Ovary (tissue), 10 donors: ENCODE measurements at regions of chr9 and their contacts with region 1.

Region 1: DNA sequence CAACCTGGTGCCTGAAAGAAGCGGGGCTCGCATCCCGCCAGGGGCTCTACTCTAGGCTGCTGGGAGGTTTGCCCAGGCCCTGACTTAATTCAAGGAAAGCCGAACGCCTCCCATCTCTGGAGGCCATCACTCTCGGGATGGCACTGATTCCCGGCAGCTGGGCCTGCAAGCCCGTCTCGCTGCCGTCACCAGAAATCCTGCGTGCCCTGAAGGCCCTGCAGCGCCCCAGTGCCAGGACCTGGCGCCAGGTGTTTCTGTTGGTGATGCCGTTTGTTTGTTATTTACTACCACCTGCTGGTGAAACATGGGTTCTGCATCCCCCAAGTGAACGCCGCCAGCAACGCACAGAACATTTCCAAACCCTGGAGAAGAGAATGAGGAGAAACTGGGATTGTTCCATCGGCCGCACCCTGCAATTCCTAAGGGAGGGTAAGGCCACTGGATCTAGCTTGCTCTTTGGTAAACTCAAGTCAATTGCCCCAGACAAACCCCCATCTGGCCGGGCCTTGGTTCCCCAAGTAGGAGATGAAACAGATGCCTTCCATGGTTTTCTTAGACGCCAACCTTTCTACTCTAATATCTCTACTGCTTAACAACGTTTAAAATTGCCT is 77.9 kb downstream of the AK8 start:
- DNase-seq: peak; percentile 71 to 84 (median 78)
- H3K4me3 ChIP-seq: no peak overlapping the region
- H3K27ac ChIP-seq: peak overlapping the region in 1 of 2 donors; percentile 20
- H3K4me1 ChIP-seq: peaks cover 13% of the 10 kb centered on the region
- H3K27me3 ChIP-seq: no peaks in the 10 kb centered on the region
- CTCF ChIP-seq: peak; percentile 80 to 92 (median 88)
- EP300 ChIP-seq: no peak
- POLR2A ChIP-seq: no peak

Region 2: DNA sequence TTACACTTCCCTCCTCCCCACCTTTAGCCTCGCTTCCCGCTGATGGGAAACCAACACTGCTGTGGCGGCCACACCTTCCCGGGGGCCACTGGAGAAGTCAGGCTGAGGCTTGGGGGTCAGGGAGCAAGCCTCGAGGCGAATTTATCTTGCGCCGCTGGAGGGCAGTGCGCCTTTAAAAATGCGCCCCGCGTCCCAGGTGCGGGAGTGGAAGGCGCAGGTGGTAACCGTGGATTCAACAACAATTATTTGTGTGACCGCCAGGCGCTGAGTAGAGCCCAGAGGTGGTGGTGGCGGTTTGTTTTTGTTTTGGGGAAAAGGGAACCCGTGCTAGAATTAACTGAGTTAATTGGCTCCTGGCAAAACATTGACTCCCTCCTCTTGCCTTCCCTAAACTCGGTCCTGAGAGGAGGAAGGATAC is 389.0 kb before region 1 on chr9:
- intact Hi-C with region 1: loop called in 2 of 4 experiments (anchors 10 kb)
- DNase-seq: peak in 4 of 5 donors; percentile 25 to 54 (median 35)
- H3K4me3 ChIP-seq: no peak overlapping the region
- H3K27ac ChIP-seq: no peak overlapping the region
- H3K4me1 ChIP-seq: peaks cover 8% of the 10 kb centered on the region
- H3K27me3 ChIP-seq: no peaks in the 10 kb centered on the region
- CTCF ChIP-seq: peak in 1 of 3 donors; percentile 13
- EP300 ChIP-seq: no peak
- POLR2A ChIP-seq: no peak

Region 3: DNA sequence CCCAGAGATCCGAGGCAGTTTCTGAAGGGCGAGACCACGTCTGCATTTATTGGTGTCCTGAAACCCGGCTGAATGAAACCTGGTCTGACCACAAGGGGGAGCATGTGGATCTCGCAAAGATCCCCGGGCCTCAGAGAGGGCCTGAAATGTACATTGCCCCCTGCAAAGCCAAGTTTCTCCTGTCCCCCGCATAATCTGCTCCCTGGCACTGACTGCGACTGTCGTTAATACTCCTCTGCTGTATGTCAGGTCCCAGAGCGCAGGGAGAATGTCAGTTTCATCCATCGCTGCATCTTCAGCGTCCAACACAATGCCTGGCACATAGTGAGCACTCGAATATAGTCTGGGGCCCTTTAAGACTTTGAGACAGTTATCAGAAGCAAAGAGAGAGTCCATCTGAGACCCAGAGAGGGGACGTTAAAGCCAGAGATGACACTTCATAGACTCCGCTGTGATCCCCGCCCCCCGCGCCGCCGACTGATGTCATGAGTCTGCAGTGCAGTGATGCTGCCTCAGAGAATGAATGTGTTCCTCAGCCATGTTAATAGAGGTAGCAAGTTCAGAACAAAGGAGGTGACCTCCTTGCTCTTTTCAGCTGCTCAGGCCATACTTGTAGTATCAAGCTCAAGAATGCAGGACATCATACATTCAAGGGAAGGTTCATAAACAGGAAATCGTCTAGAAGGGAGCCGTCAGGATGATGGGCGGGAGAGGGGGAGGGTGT is 292.2 kb before region 1 on chr9:
- intact Hi-C with region 1: loop called (anchors 1 to 5 kb)
- DNase-seq: peak; percentile 45 to 75 (median 70)
- H3K4me3 ChIP-seq: no peak overlapping the region
- H3K27ac ChIP-seq: no peak overlapping the region
- H3K4me1 ChIP-seq: peaks cover 3% of the 10 kb centered on the region
- H3K27me3 ChIP-seq: no peaks in the 10 kb centered on the region
- CTCF ChIP-seq: peak; percentile 32 to 73 (median 45)
- EP300 ChIP-seq: no peak
- POLR2A ChIP-seq: no peak

Region 4: DNA sequence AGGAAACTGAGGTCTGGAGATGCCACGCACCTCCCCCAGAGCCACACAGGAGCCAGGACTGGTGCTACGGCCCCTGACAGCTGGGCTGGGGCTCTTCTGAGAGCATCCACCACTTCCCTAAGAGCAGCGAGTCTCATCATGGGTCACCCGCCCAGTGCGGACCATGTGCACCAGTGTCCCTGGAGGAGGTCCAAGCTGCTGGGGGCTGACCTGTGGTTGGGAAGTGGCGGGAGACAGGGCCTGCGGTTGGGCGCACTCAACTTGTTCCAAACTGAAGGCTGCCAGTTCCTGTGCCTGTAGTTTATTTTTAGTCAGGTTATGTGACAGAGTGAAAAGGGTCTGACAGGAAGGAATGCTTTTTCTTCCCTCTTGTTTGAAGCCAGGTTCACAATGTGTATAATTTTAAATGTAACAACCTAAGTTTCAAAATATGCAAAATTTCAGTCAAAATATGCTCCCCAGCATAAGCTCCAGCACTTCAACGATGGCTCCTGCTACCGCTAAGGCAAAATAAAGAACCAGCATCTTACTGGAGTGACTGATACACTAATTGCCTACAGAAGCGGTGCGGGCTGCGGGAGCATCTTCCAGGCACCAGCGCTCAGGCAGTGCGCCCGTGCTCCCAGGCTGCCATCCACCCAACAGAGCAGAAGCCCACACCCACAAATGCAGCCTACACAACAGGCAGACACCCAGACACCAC is 202.9 kb before region 1 on chr9:
- intact Hi-C with region 1: no loop called
- DNase-seq: no peak
- H3K4me3 ChIP-seq: no peak overlapping the region
- H3K27ac ChIP-seq: no peak overlapping the region
- H3K4me1 ChIP-seq: no peaks in the 10 kb centered on the region
- H3K27me3 ChIP-seq: no peaks in the 10 kb centered on the region
- CTCF ChIP-seq: no peak
- EP300 ChIP-seq: no peak
- POLR2A ChIP-seq: no peak

Region 5: GRCh38 chr9:132669698-132670456 is 130.3 kb before region 1 on chr9 and contains the start of gene DDX31:
- intact Hi-C with region 1: loop called in 1 of 4 experiments (anchors 10 kb)
- DNase-seq: peak; percentile 86 to 93 (median 88)
- H3K4me3 ChIP-seq: peak within 1 kb of the TSS; percentile 92
- H3K27ac ChIP-seq: peak within 1 kb of the TSS; percentile 82 to 98
- H3K4me1 ChIP-seq: peaks cover 5% of the 10 kb centered on the region
- H3K27me3 ChIP-seq: no peaks in the 10 kb centered on the region
- CTCF ChIP-seq: no peak
- EP300 ChIP-seq: no peak
- POLR2A ChIP-seq: peak; percentile 26
- total RNA-seq, gene DDX31: 9.7 to 19.6 (median 16.4) TPM

Region 6: DNA sequence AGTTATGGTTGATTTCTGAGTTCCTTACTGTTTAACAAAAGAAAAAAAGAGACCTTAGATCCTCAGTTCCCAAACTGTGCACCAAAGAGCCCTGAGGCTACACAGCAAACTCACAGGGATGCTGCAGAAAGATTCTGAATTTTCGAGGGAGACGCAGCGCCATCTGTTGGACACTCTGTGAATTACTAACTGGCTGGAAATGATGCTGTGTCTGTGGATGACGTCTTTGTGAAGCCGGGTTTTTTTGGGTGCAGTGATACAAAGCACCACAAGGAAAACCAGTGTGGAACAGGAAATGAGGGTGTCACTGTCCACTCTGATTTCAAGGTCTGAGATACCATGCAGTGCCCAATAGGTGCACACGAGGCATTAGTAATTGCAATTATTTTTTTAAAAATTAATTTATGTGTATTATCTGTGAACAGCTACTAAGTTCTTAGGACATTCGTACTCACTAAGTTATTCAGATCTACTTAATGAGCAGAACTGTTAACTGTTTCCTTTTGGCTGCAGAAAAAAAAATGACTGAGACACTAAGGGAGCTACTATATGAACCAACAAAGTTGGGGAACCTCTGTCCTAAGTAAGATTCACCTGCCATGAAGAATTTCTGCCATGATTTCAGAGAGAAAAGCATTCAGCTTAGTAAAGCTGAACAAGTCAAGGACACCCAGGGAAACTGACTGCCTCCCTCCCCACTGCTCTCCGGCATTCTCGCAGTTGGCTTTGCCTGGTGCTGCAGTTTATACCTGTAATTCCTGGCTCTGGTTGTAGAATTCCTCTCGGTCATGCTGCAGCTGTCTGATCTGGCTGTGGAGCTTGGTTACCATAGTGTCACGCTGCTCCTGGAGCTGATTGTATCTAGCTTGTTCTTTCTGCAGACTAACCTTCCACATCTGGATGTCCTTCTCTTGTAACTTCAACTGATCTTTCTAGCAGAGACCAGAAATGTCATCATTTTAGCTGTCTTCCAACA is 102.0 kb after region 1 on chr9:
- intact Hi-C with region 1: loop called in 1 of 4 experiments (anchors 10 kb)
- DNase-seq: peak; percentile 58 to 83 (median 75)
- H3K4me3 ChIP-seq: no peak overlapping the region
- H3K27ac ChIP-seq: peak overlapping the region in 1 of 2 donors; percentile 2
- H3K4me1 ChIP-seq: no peaks in the 10 kb centered on the region
- H3K27me3 ChIP-seq: no peaks in the 10 kb centered on the region
- CTCF ChIP-seq: peak; percentile 71 to 82 (median 74)
- EP300 ChIP-seq: no peak
- POLR2A ChIP-seq: no peak

Region 7: DNA sequence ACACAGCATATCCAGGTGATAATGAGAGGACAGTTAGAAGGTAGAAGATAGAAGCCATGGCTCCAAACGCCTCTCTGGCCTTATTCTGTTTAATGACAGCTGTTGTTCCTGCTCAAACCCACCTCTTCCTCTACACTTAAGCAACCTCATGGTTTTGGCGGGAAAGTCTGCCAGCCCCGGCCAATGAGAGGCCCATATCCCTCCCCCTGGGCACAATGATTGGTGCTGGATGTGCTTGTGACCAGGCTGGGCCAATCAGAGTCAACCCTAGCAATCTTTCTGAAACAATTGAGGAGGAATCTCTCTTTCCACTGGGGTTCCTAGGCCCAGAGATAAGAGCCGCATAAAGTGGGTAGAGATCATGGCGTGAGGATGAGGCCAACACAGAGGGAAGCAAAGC is 173.6 kb after region 1 on chr9:
- intact Hi-C with region 1: loop called in 1 of 4 experiments (anchors 10 kb)
- DNase-seq: no peak
- H3K4me3 ChIP-seq: no peak overlapping the region
- H3K27ac ChIP-seq: no peak overlapping the region
- H3K4me1 ChIP-seq: peaks cover 4% of the 10 kb centered on the region
- H3K27me3 ChIP-seq: no peaks in the 10 kb centered on the region
- CTCF ChIP-seq: no peak
- EP300 ChIP-seq: no peak
- POLR2A ChIP-seq: no peak